IMR-90 (cell line): ENCODE measurements at regions of chr16 and their contacts with region 1.

Region 1: DNA sequence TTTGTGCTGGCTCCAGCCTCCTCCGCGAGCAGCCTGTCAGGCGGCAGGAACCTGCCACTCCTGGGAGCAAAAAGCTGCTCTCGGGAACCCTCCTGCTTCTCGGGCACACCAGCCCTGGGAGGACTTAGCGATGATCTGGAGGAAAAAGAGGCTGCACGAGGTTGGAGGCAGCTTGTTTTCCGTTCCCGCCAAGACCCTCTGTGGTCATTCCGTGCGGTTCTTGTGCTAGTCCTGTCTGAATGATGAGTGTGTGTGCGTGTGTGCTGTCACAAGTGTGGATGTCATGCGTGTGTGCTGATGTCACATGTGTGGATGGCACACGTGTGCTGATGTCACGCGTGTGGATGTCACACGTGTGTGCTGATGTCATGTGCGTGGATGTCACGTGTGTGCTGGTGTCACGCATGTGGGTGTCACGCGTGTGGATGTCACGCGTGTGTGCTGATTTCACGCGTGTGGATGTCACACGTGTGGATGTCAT is 150.0 kb downstream of the NPIPB11 start:
- DNase-seq: no peak
- ATAC-seq: no peak
- H3K4me3 ChIP-seq: no peak overlapping the region
- H3K27ac ChIP-seq: peak overlapping the region; percentile 27; the same call in 1 of the 2 replicates
- H3K4me1 ChIP-seq: peaks cover 6% of the 10 kb centered on the region
- H3K27me3 ChIP-seq: no peaks in the 10 kb centered on the region
- CTCF ChIP-seq: no peak
- POLR2A ChIP-seq: no peak
- RAD21 ChIP-seq: no peak

Region 2: GRCh38 chr16:28879841-28880588 is 376.5 kb before region 1 on chr16:
- CTCF ChIA-PET with region 1: no interaction called
- POLR2A ChIA-PET with region 1: no interaction called
- dilution Hi-C with region 1: no loop called
- in situ Hi-C with region 1: no loop called
- intact Hi-C with region 1: no loop called
- DNase-seq: peak; percentile 78
- ATAC-seq: peak; percentile 99
- H3K4me3 ChIP-seq: peak overlapping the region; percentile 71
- H3K27ac ChIP-seq: peak overlapping the region; percentile 28; the same call in 1 of the 2 replicates
- H3K4me1 ChIP-seq: peaks cover 7% of the 10 kb centered on the region; the same call in 1 of the 2 replicates
- H3K27me3 ChIP-seq: no peaks in the 10 kb centered on the region
- CTCF ChIP-seq: no peak
- POLR2A ChIP-seq: no peak
- RAD21 ChIP-seq: no peak

Region 3: GRCh38 chr16:28950648-28951409 is 305.7 kb before region 1 on chr16 and contains the start of gene NFATC2IP:
- CTCF ChIA-PET with region 1: no interaction called
- POLR2A ChIA-PET with region 1: no interaction called
- dilution Hi-C with region 1: no loop called
- in situ Hi-C with region 1: loop called (anchors 25 kb)
- intact Hi-C with region 1: no loop called
- DNase-seq: peak; percentile 100
- ATAC-seq: peak; percentile 94
- H3K4me3 ChIP-seq: peak within 1 kb of the TSS; percentile 55
- H3K27ac ChIP-seq: peak within 1 kb of the TSS; percentile 80
- H3K4me1 ChIP-seq: peaks cover 8% of the 10 kb centered on the region
- H3K27me3 ChIP-seq: no peaks in the 10 kb centered on the region
- CTCF ChIP-seq: no peak
- POLR2A ChIP-seq: peak; percentile 38; the same call in 1 of the 2 replicates
- RAD21 ChIP-seq: no peak
- total RNA-seq, gene NFATC2IP: 8.1 and 10.0 TPM in 2 replicates

Region 4: DNA sequence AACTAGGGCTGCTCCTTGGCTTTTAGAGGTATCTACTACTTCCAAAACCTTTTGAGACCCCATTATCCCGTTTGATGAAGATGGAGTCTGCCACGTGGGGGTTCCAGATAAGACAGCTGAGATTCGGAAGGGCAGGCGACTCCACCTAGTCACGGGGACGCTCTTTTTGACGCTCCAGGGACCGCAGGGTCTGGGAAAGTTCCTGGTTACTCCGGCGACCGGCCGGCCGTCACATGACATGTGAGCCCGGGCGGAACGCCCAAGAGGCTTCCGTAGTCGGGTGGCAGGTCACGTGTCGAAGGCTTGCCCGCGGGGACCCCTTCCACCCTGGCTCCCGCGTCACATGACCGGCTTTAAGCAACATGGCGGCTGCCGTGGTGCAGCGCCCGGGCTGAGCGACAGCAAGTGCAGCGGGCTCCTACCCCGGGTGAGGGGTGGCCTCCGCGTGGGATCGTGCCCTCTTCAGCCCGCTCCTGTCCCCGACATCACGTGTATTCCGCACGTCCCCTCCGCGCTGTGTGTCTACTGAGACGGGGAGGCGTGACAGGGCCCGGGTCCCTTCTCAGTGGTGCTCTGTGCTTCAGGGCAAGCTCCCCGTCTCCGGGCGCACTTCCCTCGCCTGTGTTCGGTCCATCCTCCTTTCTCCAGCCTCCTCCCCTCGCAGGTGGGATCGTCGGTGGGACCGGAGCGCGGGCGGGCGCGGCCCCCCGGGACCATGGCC is 281.9 kb before region 1 on chr16 and contains the start of gene SPNS1:
- CTCF ChIA-PET with region 1: no interaction called
- POLR2A ChIA-PET with region 1: no interaction called
- dilution Hi-C with region 1: no loop called
- in situ Hi-C with region 1: loop called (anchors 25 kb)
- intact Hi-C with region 1: loop called (anchors 5 kb)
- DNase-seq: peak; percentile 97
- ATAC-seq: peak; percentile 88
- H3K4me3 ChIP-seq: peak within 1 kb of the TSS; percentile 75
- H3K27ac ChIP-seq: peak within 1 kb of the TSS; percentile 76
- H3K4me1 ChIP-seq: no peaks in the 10 kb centered on the region
- H3K27me3 ChIP-seq: no peaks in the 10 kb centered on the region
- CTCF ChIP-seq: no peak
- POLR2A ChIP-seq: peak; percentile 82; the same call in 1 of the 2 replicates
- RAD21 ChIP-seq: no peak; the same call in 1 of the 2 replicates
- total RNA-seq, gene SPNS1: 4.7 and 6.9 TPM in 2 replicates

Region 5: GRCh38 chr16:29117631-29118030 is 138.9 kb before region 1 on chr16:
- CTCF ChIA-PET with region 1: no interaction called
- POLR2A ChIA-PET with region 1: no interaction called
- dilution Hi-C with region 1: no loop called
- in situ Hi-C with region 1: no loop called
- intact Hi-C with region 1: loop called (anchors 5 kb)
- DNase-seq: no peak
- ATAC-seq: no peak
- H3K4me3 ChIP-seq: no peak overlapping the region
- H3K27ac ChIP-seq: no peak overlapping the region
- H3K4me1 ChIP-seq: peaks cover 12% of the 10 kb centered on the region; the same call in 1 of the 2 replicates
- H3K27me3 ChIP-seq: no peaks in the 10 kb centered on the region
- CTCF ChIP-seq: no peak
- POLR2A ChIP-seq: no peak
- RAD21 ChIP-seq: no peak